Naive thymus-derived CD4-positive, alpha-beta T cell (primary cell): ENCODE measurements at regions of chr20 and their contacts with region 1.

Region 1: DNA sequence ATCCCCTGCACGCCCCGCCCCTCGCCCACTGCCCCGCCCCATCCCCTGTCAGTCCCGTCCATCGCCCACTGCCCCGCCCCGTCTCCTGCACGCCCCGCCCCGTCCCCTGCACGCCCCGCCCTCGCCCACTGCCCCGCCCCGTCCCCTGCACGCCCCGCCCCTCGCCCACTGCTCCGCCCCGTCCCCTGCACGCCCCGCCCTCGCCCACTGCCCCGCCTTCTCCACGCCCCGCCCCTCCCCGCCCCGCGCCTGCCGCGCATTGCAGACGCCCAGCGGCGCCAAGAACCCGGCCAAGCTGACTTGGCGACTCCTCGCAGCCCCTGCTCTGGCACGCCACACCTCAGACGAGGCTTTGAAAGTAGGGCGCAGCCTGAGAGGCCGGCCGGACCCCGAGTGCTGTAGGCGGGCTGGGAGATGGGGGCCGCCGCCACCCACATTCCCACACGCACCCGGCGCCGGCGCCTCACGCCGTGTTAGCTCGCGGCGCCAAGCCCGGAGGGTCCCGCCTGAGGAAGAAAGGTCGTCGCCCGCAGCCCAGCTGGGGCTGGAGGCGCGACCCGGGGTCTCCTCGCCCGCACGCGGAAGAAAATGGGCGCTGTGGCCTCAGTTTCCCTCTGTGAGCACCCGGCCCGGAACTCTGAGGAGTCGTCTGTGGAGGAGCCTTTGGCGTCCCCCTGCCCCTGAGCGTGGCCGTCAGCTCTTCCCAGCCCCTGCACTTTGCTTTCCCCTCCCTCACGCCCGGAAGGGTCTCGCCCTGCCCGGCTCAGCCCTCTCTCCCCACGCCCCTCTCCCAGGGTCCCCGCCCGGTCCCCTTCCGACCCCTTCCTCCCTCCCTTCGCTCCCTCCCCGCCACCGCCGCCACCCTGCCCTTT is at the start of gene RAD21L1:
- DNase-seq: peak; percentile 55 to 83 (median 66)
- ATAC-seq: peak; percentile 96
- H3K4me3 ChIP-seq: peak within 1 kb of the TSS; percentile 76
- H3K4me3 Mint-ChIP-seq: peak within 1 kb of the TSS; percentile 82 to 92 (median 87)
- H3K27ac ChIP-seq: peak within 1 kb of the TSS; percentile 73
- H3K27ac Mint-ChIP-seq: peak within 1 kb of the TSS in 8 of 9 donors; percentile 34 to 90 (median 81)
- H3K4me1 ChIP-seq: peaks cover 8 to 12% of the 10 kb centered on the region in 2 donors
- H3K4me1 Mint-ChIP-seq: peaks cover 0 to 21% (median 14%) of the 10 kb centered on the region in 7 donors
- H3K27me3 ChIP-seq: peaks cover 0 to 11% of the 10 kb centered on the region in 2 donors
- H3K27me3 Mint-ChIP-seq: peaks cover 0 to 65% (median 16%) of the 10 kb centered on the region in 5 donors
- total RNA-seq, gene RAD21L1: 0.58 to 0.81 (median 0.64) TPM in 3 of 5 experiments, not detected in the others

Region 2: DNA sequence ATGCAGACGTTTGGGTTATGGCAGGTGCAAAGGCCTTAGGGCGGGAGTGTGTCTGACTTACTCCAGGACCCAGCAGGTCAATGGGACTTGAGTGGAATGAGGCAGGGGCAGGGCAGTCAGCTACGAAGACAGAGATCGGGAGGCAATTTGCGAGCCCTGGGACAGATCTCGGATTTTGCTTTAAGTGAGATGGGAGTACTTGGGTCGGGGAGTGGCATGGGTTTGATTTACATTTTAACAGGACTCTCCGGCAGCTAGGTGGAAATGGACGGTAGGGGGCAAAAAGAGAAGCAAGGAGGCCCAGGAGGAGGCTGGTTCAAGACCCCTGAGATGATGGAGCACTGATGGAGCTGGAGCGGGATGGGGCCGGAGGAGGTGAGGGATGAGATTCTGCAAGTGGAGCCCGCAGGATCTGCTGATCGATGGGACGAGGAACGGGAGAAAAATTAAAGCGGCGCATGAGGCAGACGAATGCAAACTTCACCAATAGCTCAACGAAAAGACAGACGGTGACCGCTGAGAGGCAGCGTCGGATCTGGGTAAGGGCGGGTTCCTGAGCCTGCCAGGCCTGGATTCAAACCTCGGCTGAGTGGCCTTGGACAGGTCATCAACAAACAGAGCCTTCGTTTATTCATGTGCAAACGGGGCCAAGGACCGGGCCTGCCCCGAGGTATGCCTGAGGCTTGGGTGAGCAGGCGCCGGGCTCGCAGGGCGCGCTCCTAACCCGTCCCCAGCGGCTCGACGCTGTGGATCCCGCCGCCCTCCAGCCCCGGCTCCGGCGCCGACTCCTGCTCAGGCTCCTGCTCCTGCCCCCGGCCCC is 818.7 kb before region 1 on chr20:
- CTCF ChIA-PET with region 1: no interaction called
- POLR2A ChIA-PET with region 1: no interaction called
- intact Hi-C with region 1: loop called in 1 of 2 experiments (anchors 10 kb)
- DNase-seq: peak in 8 of 9 donors; percentile 31 to 74 (median 39)
- ATAC-seq: peak; percentile 49
- H3K4me3 ChIP-seq: peak overlapping the region; percentile 71
- H3K4me3 Mint-ChIP-seq: peak overlapping the region; percentile 86 to 96 (median 94)
- H3K27ac ChIP-seq: peak overlapping the region; percentile 83
- H3K27ac Mint-ChIP-seq: peak overlapping the region; percentile 89 to 99 (median 96)
- H3K4me1 ChIP-seq: peaks cover 20 to 32% of the 10 kb centered on the region in 2 donors
- H3K4me1 Mint-ChIP-seq: peaks cover 26 to 59% (median 46%) of the 10 kb centered on the region in 7 donors
- H3K27me3 ChIP-seq: no peaks in the 10 kb centered on the region
- H3K27me3 Mint-ChIP-seq: no peaks in the 10 kb centered on the region

Region 3: GRCh38 chr20:1094751-1095150 is 131.3 kb before region 1 on chr20:
- CTCF ChIA-PET with region 1: no interaction called
- POLR2A ChIA-PET with region 1: no interaction called
- intact Hi-C with region 1: no loop called
- DNase-seq: no peak
- ATAC-seq: no peak
- H3K4me3 ChIP-seq: no peak overlapping the region
- H3K4me3 Mint-ChIP-seq: no peak overlapping the region
- H3K27ac ChIP-seq: no peak overlapping the region
- H3K27ac Mint-ChIP-seq: no peak overlapping the region
- H3K4me1 ChIP-seq: no peaks in the 10 kb centered on the region
- H3K4me1 Mint-ChIP-seq: no peaks in the 10 kb centered on the region
- H3K27me3 ChIP-seq: no peaks in the 10 kb centered on the region
- H3K27me3 Mint-ChIP-seq: peaks cover 0 to 4% (median 0%) of the 10 kb centered on the region in 5 donors

Region 4: GRCh38 chr20:1118336-1119127 is 107.5 kb before region 1 on chr20 and contains the start of gene PSMF1:
- CTCF ChIA-PET with region 1: no interaction called
- POLR2A ChIA-PET with region 1: no interaction called
- intact Hi-C with region 1: loop called (anchors 1 to 5 kb)
- DNase-seq: peak; percentile 93 to 99 (median 96)
- ATAC-seq: peak; percentile 98
- H3K4me3 ChIP-seq: peak within 1 kb of the TSS; percentile 98
- H3K4me3 Mint-ChIP-seq: peak within 1 kb of the TSS; percentile 92 to 97 (median 94)
- H3K27ac ChIP-seq: peak within 1 kb of the TSS; percentile 85
- H3K27ac Mint-ChIP-seq: peak within 1 kb of the TSS; percentile 81 to 97 (median 94)
- H3K4me1 ChIP-seq: peaks cover 40 to 45% of the 10 kb centered on the region in 2 donors
- H3K4me1 Mint-ChIP-seq: peaks cover 46 to 68% (median 61%) of the 10 kb centered on the region in 7 donors
- H3K27me3 ChIP-seq: no peaks in the 10 kb centered on the region
- H3K27me3 Mint-ChIP-seq: no peaks in the 10 kb centered on the region
- total RNA-seq, gene PSMF1: 88.7 to 157 (median 114) TPM

Region 5: GRCh38 chr20:1281279-1282057 is 55.4 kb after region 1 on chr20:
- CTCF ChIA-PET with region 1: interaction called, 3 read pairs
- POLR2A ChIA-PET with region 1: interaction called, 7 read pairs
- intact Hi-C with region 1: loop called in 1 of 2 experiments (anchors 5 kb)
- DNase-seq: peak in 1 of 9 donors; percentile 20
- ATAC-seq: no peak
- H3K4me3 ChIP-seq: no peak overlapping the region
- H3K4me3 Mint-ChIP-seq: peak overlapping the region in 9 of 10 donors; percentile 49 to 83 (median 67)
- H3K27ac ChIP-seq: peak overlapping the region; percentile 53
- H3K27ac Mint-ChIP-seq: peak overlapping the region in 8 of 9 donors; percentile 83 to 99 (median 89)
- H3K4me1 ChIP-seq: peaks cover 0 to 55% of the 10 kb centered on the region in 2 donors
- H3K4me1 Mint-ChIP-seq: peaks cover 13 to 75% (median 63%) of the 10 kb centered on the region in 7 donors
- H3K27me3 ChIP-seq: no peaks in the 10 kb centered on the region
- H3K27me3 Mint-ChIP-seq: no peaks in the 10 kb centered on the region

Region 6: DNA sequence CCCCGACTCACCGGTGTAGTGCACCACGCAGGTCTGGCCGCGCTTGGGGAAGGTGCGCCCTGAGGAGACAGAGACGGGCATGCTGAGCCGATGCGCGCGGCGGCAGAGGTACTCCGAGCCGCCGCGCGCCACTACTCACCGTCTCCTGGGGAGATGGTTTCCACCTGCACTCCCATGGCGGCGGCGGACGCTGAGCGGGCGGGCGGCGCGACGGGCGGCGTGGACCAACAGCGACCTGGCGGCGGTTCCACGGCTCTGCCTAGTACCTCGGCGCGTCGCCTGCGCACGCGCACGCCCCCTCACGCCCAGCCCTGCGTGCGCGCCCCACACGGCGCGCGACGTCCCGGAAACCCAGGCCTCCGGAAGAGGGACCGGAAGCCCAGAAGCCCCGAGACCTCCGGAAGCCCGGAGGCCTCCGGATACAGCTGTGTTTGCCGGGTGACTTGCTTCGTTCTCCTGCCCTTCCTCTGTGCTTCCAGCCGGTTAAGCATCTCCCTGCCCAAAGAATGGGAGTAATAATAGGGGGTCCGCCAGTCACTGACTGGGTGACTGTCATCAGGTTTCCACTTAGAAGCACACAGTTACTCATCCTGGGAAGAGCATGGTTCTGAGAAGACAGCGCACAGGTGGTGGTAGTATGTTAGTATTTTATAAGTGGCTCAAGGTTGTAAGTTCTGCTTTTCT is 166.9 kb after region 1 on chr20 and contains the start of gene FKBP1A:
- CTCF ChIA-PET with region 1: no interaction called
- POLR2A ChIA-PET with region 1: interaction called, 4 read pairs
- intact Hi-C with region 1: loop called (anchors 2 kb)
- DNase-seq: peak; percentile 80 to 92 (median 89)
- ATAC-seq: peak; percentile 96
- H3K4me3 ChIP-seq: peak within 1 kb of the TSS; percentile 74
- H3K4me3 Mint-ChIP-seq: peak within 1 kb of the TSS; percentile 79 to 98 (median 94)
- H3K27ac ChIP-seq: peak within 1 kb of the TSS; percentile 82
- H3K27ac Mint-ChIP-seq: peak within 1 kb of the TSS; percentile 91 to 99 (median 96)
- H3K4me1 ChIP-seq: peaks cover 39 to 44% of the 10 kb centered on the region in 2 donors
- H3K4me1 Mint-ChIP-seq: peaks cover 45 to 82% (median 75%) of the 10 kb centered on the region in 7 donors
- H3K27me3 ChIP-seq: no peaks in the 10 kb centered on the region
- H3K27me3 Mint-ChIP-seq: peaks cover 0 to 30% (median 0%) of the 10 kb centered on the region in 5 donors
- total RNA-seq, gene FKBP1A: 74.5 to 253 (median 93.1) TPM

Region 7: GRCh38 chr20:2314759-2315439 is 1088.9 kb after region 1 on chr20:
- CTCF ChIA-PET with region 1: no interaction called
- POLR2A ChIA-PET with region 1: no interaction called
- intact Hi-C with region 1: no loop called
- DNase-seq: no peak
- ATAC-seq: peak; percentile 64
- H3K4me3 ChIP-seq: no peak overlapping the region
- H3K4me3 Mint-ChIP-seq: no peak overlapping the region
- H3K27ac ChIP-seq: no peak overlapping the region
- H3K27ac Mint-ChIP-seq: no peak overlapping the region
- H3K4me1 ChIP-seq: no peaks in the 10 kb centered on the region
- H3K4me1 Mint-ChIP-seq: peaks cover 0 to 4% (median 0%) of the 10 kb centered on the region in 7 donors
- H3K27me3 ChIP-seq: no peaks in the 10 kb centered on the region
- H3K27me3 Mint-ChIP-seq: peaks cover 0 to 6% (median 5%) of the 10 kb centered on the region in 5 donors

Region 8: DNA sequence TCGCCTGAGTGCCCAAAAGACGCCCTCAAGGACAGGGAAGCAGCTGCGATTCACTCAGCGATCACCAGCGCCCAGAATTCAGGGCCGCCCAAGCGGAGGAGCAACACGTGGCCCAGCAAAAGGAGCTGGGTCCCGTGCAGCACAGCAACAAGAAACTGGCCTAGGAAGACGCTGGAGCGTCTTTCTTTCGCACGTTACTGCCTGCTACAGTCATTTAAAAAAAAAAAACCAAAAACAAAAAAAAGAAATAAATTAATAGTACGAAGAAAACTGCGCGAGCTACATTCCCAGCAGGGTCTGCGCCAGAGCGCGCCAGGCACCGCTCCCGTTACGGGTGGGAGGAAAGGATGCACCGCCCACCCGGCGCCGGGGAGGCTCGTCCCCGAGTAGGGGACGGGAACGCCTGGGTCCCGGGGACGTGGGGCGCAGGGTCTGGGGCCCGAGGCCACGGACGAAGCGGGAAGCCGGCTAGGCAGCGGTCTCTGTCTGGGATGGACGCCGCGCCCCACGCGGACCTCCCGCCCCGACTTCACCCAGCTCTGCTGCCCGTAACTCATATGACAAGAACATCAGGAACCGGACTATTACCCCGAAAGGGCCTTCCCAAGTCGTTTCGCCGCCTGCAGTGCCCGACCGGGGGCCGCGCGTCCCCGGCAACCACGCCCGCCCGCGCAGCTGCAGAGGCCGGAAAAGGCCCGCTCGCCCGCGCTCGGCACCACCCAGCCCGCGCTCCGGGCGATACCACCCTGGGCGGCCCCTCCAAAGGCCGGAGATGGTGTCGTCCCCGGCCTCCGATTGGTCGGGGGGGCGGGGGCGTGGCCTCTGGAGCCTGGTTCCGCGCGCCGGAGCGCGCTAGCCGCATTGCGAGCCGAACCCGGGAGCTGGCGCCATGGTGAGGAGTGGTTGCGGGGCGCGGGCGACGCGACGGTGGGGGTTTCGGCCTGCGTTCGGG is 1426.0 kb after region 1 on chr20 and contains the start of gene NOP56:
- CTCF ChIA-PET with region 1: no interaction called
- POLR2A ChIA-PET with region 1: no interaction called
- intact Hi-C with region 1: loop called in 1 of 2 experiments (anchors 5 kb)
- DNase-seq: peak; percentile 89 to 100 (median 96)
- ATAC-seq: peak; percentile 98
- H3K4me3 ChIP-seq: peak within 1 kb of the TSS; percentile 82
- H3K4me3 Mint-ChIP-seq: peak within 1 kb of the TSS; percentile 87 to 92 (median 90)
- H3K27ac ChIP-seq: peak within 1 kb of the TSS; percentile 90
- H3K27ac Mint-ChIP-seq: peak within 1 kb of the TSS; percentile 85 to 94 (median 90)
- H3K4me1 ChIP-seq: peaks cover 22 to 26% of the 10 kb centered on the region in 2 donors
- H3K4me1 Mint-ChIP-seq: peaks cover 16 to 53% (median 39%) of the 10 kb centered on the region in 7 donors
- H3K27me3 ChIP-seq: no peaks in the 10 kb centered on the region
- H3K27me3 Mint-ChIP-seq: no peaks in the 10 kb centered on the region
- total RNA-seq, gene NOP56: 216 to 375 (median 287) TPM